Common myeloid progenitor, CD34-positive (primary cell): ENCODE measurements at regions of chr15 and their contacts with region 1.

Region 1: GRCh38 chr15:80020731-80021130 is 38.7 kb upstream of the ZFAND6 start:
- DNase-seq: no peak
- H3K4me3 ChIP-seq: no peak overlapping the region
- H3K27ac ChIP-seq: no peak overlapping the region
- H3K4me1 ChIP-seq: no peaks in the 10 kb centered on the region
- H3K27me3 ChIP-seq: peaks cover 0 to 2% (median 0%) of the 10 kb centered on the region in 5 experiments

Region 2: DNA sequence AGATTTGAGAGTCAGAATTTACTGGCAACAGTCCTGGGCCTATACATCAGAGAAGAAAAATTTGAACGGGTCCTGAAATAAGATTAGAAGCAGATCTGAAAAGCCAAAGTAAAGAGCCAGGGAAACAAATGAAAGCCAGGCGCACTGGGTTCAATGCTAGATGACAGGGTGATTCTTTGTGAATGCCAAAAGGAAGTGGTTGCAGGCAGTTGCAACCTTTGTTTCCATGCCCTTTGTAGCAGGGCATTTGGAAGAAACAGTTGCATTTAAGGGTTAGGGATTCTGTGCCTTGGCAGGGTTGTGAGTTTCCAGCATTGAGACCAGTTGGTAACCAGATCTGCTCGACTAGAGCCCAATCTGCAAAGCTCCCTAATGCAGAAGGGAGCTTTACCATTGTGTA is 87.5 kb before region 1 on chr15:
- CTCF ChIA-PET with region 1: no interaction called
- POLR2A ChIA-PET with region 1: no interaction called
- DNase-seq: no peak
- H3K4me3 ChIP-seq: no peak overlapping the region
- H3K27ac ChIP-seq: no peak overlapping the region
- H3K4me1 ChIP-seq: peaks cover 0 to 5% (median 2%) of the 10 kb centered on the region in 4 experiments
- H3K27me3 ChIP-seq: no peaks in the 10 kb centered on the region

Region 3: GRCh38 chr15:80030738-80031137 is 10.0 kb after region 1 on chr15:
- CTCF ChIA-PET with region 1: no interaction called
- POLR2A ChIA-PET with region 1: no interaction called
- DNase-seq: no peak
- H3K4me3 ChIP-seq: no peak overlapping the region
- H3K27ac ChIP-seq: no peak overlapping the region
- H3K4me1 ChIP-seq: peaks cover 4 to 14% (median 11%) of the 10 kb centered on the region in 4 experiments
- H3K27me3 ChIP-seq: no peaks in the 10 kb centered on the region

Region 4: GRCh38 chr15:80041494-80042253 is 20.9 kb after region 1 on chr15:
- CTCF ChIA-PET with region 1: no interaction called
- POLR2A ChIA-PET with region 1: no interaction called
- DNase-seq: no peak
- H3K4me3 ChIP-seq: no peak overlapping the region
- H3K27ac ChIP-seq: no peak overlapping the region
- H3K4me1 ChIP-seq: no peaks in the 10 kb centered on the region
- H3K27me3 ChIP-seq: no peaks in the 10 kb centered on the region

Region 5: GRCh38 chr15:80093854-80094418 is 73.2 kb after region 1 on chr15:
- CTCF ChIA-PET with region 1: no interaction called
- POLR2A ChIA-PET with region 1: no interaction called
- DNase-seq: peak; percentile 33 to 76 (median 60)
- H3K4me3 ChIP-seq: no peak overlapping the region
- H3K27ac ChIP-seq: no peak overlapping the region
- H3K4me1 ChIP-seq: peaks cover 0 to 40% (median 3%) of the 10 kb centered on the region in 4 experiments
- H3K27me3 ChIP-seq: no peaks in the 10 kb centered on the region

Region 6: GRCh38 chr15:81098861-81099651 is 1078.3 kb after region 1 on chr15:
- CTCF ChIA-PET with region 1: no interaction called
- POLR2A ChIA-PET with region 1: interaction called, 12 read pairs
- DNase-seq: peak; percentile 86 to 90 (median 88)
- H3K4me3 ChIP-seq: peak overlapping the region in 5 of 7 experiments; percentile 4 to 61 (median 34)
- H3K27ac ChIP-seq: peak overlapping the region in 1 of 2 experiments; percentile 51
- H3K4me1 ChIP-seq: peaks cover 3 to 44% (median 30%) of the 10 kb centered on the region in 4 experiments
- H3K27me3 ChIP-seq: no peaks in the 10 kb centered on the region